ENCODE measurements at regions of chr5 and their contacts with region 1.

Region 1: GRCh38 chr5:157858527-157859226 is at the start of gene CLINT1:
- DNase-seq: peak; percentile 89 to 91
- ATAC-seq: peak; percentile 96 to 97
- H3K4me3 ChIP-seq: peak within 1 kb of the TSS; percentile 70
- H3K27ac ChIP-seq: peak within 1 kb of the TSS; percentile 96 to 97
- H3K4me1 ChIP-seq: peaks cover 29% of the 10 kb centered on the region; the same call in 2 of the 3 replicates
- CTCF ChIP-seq: no peak
- EP300 ChIP-seq: no peak
- POLR2A ChIP-seq: peak; percentile 69
- RAD21 ChIP-seq: no peak
- polyA plus RNA-seq, gene CLINT1: 185 and 240 TPM in 2 replicates

Region 2: GRCh38 chr5:157528036-157528632 is 330.5 kb before region 1 on chr5:
- CTCF ChIA-PET with region 1: no interaction called
- POLR2A ChIA-PET with region 1: no interaction called
- DNase-seq: no peak
- ATAC-seq: no peak
- H3K4me3 ChIP-seq: no peak overlapping the region
- H3K27ac ChIP-seq: no peak overlapping the region
- H3K4me1 ChIP-seq: no peaks in the 10 kb centered on the region
- CTCF ChIP-seq: no peak
- EP300 ChIP-seq: no peak
- POLR2A ChIP-seq: no peak
- RAD21 ChIP-seq: no peak

Region 3: GRCh38 chr5:157756122-157756521 is 102.6 kb before region 1 on chr5:
- CTCF ChIA-PET with region 1: no interaction called
- POLR2A ChIA-PET with region 1: no interaction called
- DNase-seq: no peak
- ATAC-seq: no peak
- H3K4me3 ChIP-seq: no peak overlapping the region
- H3K27ac ChIP-seq: no peak overlapping the region
- H3K4me1 ChIP-seq: no peaks in the 10 kb centered on the region
- CTCF ChIP-seq: no peak
- EP300 ChIP-seq: no peak
- POLR2A ChIP-seq: no peak
- RAD21 ChIP-seq: no peak

Region 4: GRCh38 chr5:157835041-157835440 is 23.6 kb before region 1 on chr5:
- CTCF ChIA-PET with region 1: interaction called, 30 read pairs
- POLR2A ChIA-PET with region 1: interaction called, 4 read pairs
- DNase-seq: no peak
- ATAC-seq: no peak
- H3K4me3 ChIP-seq: no peak overlapping the region
- H3K27ac ChIP-seq: no peak overlapping the region
- H3K4me1 ChIP-seq: no peaks in the 10 kb centered on the region
- CTCF ChIP-seq: no peak
- EP300 ChIP-seq: no peak
- POLR2A ChIP-seq: no peak
- RAD21 ChIP-seq: no peak

Region 5: GRCh38 chr5:157870837-157871834 is 12.5 kb after region 1 on chr5:
- CTCF ChIA-PET with region 1: interaction called, 23 read pairs
- POLR2A ChIA-PET with region 1: interaction called, 13 read pairs
- DNase-seq: peak; percentile 76 to 93
- ATAC-seq: peak; percentile 85 to 95
- H3K4me3 ChIP-seq: no peak overlapping the region
- H3K27ac ChIP-seq: peak overlapping the region; percentile 83 to 91
- H3K4me1 ChIP-seq: peaks cover 34% of the 10 kb centered on the region
- CTCF ChIP-seq: peak; percentile 16; the same call in 1 of the 3 replicates
- EP300 ChIP-seq: peak in 1 of 2 experiments; percentile 69; a peak in 2 of 5 replicates
- POLR2A ChIP-seq: no peak
- RAD21 ChIP-seq: no peak

Region 6: DNA sequence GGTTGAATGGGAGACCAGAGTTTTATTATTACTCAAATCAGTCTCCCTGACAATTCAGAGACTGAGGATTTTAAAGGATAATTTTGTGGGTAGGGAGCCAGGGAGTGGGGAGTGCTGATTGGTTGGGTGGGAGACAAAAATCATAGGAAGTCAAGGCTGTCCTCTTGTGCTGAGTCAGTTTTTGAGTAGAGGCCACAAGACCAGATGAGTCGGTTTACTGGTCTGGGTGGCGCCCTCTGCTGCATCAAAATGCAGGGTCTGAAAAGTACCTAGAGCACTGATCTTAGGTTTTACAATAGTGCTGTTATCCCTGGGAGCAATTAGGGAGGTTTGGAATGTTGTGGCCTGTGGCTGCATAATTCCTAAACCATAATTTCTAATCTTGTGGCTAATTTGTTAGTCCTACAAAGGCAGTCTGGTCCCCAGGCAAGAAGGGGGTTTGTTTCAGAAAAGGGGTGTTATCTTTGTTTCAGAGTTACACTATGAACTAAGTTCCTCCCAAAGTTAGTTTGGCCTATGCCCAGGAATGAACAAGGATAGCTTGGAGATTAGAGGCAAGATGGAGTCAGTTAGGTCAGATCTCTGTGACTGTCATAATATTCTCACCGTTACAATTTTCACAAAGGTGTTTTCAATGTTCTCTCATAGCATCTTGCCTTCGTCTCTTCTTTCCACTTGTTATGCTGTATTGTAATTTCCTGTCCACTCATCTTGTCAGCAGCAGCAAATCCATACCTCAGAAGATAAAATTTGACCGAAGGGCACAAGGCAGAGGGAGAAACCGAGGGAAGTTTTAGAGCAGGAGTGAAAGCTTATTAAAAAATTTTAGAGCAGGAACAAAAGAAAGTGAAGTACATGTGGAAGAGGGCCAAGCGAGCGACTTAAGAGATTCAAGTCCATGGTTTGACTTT is 59.5 kb after region 1 on chr5:
- CTCF ChIA-PET with region 1: interaction called, 19 read pairs
- POLR2A ChIA-PET with region 1: no interaction called
- DNase-seq: peak; percentile 25 to 86
- ATAC-seq: peak; percentile 93 to 97
- H3K4me3 ChIP-seq: no peak overlapping the region
- H3K27ac ChIP-seq: peak overlapping the region in 1 of 2 experiments; percentile 60; a peak in 2 of 6 replicates
- H3K4me1 ChIP-seq: peaks cover 8% of the 10 kb centered on the region; the same call in 1 of the 3 replicates
- CTCF ChIP-seq: peak; percentile 68
- EP300 ChIP-seq: no peak
- POLR2A ChIP-seq: no peak
- RAD21 ChIP-seq: peak; percentile 62 to 71

Region 7: DNA sequence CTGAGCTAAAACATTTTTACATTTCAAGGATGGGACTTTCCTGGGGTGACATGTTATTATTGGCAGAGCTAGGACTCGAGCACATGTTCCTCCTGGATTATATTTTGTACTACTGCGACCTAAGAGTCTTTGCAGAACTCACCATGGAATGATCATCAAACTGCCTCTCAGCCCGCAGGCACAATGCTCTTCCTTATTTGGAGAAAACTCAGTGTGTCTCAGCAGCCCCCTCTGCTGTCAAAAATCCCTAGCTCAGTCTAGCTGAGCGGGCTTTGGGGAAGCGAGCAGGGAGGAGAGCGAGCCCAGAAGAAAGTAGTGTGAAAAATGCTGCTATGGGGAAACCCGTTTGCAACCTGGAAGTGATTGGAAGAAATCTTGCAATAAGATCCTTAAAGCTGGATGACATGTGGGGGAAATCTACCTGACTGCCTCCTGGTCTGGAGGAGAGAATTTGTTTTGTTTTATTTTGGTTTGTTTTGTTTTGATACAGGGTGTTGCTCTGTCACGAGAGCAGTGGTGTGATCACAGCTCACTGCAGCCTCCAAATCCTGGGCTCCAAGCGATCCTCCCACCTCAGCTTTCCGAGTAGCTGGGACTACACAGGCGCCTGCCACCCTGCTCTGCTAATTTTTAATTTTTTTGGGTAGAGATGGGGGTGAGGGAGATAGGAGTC is 90.2 kb after region 1 on chr5:
- CTCF ChIA-PET with region 1: interaction called, 46 read pairs
- POLR2A ChIA-PET with region 1: no interaction called
- DNase-seq: peak; percentile 71 to 92
- ATAC-seq: peak; percentile 99 to 100
- H3K4me3 ChIP-seq: peak overlapping the region; percentile 23; the same call in 2 of the 3 replicates
- H3K27ac ChIP-seq: peak overlapping the region; percentile 50 to 76
- H3K4me1 ChIP-seq: peaks cover 5% of the 10 kb centered on the region
- CTCF ChIP-seq: peak; percentile 85
- EP300 ChIP-seq: no peak
- POLR2A ChIP-seq: no peak
- RAD21 ChIP-seq: peak; percentile 77 to 80

Region 8: GRCh38 chr5:158119961-158120723 is 261.5 kb after region 1 on chr5:
- CTCF ChIA-PET with region 1: no interaction called
- POLR2A ChIA-PET with region 1: no interaction called
- DNase-seq: no peak
- ATAC-seq: no peak
- H3K4me3 ChIP-seq: no peak overlapping the region
- H3K27ac ChIP-seq: no peak overlapping the region
- H3K4me1 ChIP-seq: no peaks in the 10 kb centered on the region
- CTCF ChIP-seq: no peak
- EP300 ChIP-seq: no peak
- POLR2A ChIP-seq: no peak
- RAD21 ChIP-seq: no peak

Measured in A549 (cell line).